Activated CD4-positive, alpha-beta T cell treated with anti-CD3 and anti-CD28 coated beads for 36 hours (primary cell): ENCODE measurements at regions of chr11 and their contacts with region 1.

Region 1: GRCh38 chr11:72430741-72431570 is 3.4 kb downstream of the CLPB start:
- DNase-seq: peak; percentile 64
- ATAC-seq: peak; percentile 42
- H3K4me3 Mint-ChIP-seq: peak overlapping the region; percentile 14
- H3K27ac Mint-ChIP-seq: peak overlapping the region; percentile 68
- H3K4me1 Mint-ChIP-seq: peaks cover 29% of the 10 kb centered on the region
- H3K27me3 Mint-ChIP-seq: no peaks in the 10 kb centered on the region

Region 2: GRCh38 chr11:71537540-71537939 is 893.4 kb before region 1 on chr11:
- CTCF ChIA-PET with region 1: no interaction called
- POLR2A ChIA-PET with region 1: no interaction called
- intact Hi-C with region 1: no loop called
- DNase-seq: no peak
- ATAC-seq: no peak
- H3K4me3 Mint-ChIP-seq: no peak overlapping the region
- H3K27ac Mint-ChIP-seq: no peak overlapping the region
- H3K4me1 Mint-ChIP-seq: peaks cover 7% of the 10 kb centered on the region
- H3K27me3 Mint-ChIP-seq: peaks cover 5% of the 10 kb centered on the region

Region 3: DNA sequence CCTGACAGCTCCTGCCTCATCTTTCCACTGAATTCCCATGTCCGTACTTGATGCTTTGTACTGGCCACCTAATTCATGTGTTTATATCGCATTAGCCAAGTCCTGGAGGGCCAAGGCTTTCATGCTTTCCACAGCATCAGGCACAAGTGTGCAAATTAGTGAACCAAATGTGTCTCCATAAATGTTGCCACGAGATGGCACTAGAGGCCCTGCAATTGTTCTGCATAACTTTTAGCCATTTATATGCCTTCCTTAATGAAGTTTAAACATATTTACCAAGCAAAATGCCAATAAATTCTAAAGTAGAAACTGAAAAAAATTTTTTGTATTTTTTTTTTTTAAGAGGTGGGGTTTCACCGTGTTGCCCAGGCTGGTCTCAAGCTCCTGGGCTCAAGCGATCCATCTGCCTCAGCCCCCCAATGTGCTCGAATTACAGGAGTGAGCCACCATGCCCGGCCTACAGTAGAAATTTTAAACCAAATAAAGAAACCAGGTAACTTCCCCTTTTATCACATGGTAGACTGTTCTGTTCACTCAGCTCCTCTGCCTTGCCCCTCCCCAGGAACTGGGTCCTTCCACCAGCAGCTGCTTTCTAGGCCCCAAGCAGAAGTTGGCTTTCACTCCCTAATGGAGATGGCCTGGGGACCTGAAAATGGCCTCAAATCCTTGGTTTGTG is 453.1 kb before region 1 on chr11:
- CTCF ChIA-PET with region 1: no interaction called
- POLR2A ChIA-PET with region 1: no interaction called
- intact Hi-C with region 1: loop called in 1 of 2 experiments (anchors 5 kb)
- DNase-seq: peak; percentile 69
- ATAC-seq: peak; percentile 63
- H3K4me3 Mint-ChIP-seq: no peak overlapping the region
- H3K27ac Mint-ChIP-seq: no peak overlapping the region
- H3K4me1 Mint-ChIP-seq: peaks cover 2% of the 10 kb centered on the region
- H3K27me3 Mint-ChIP-seq: no peaks in the 10 kb centered on the region

Region 4: GRCh38 chr11:72102946-72103753 is 327.8 kb before region 1 on chr11 and contains the start of gene LAMTOR1:
- CTCF ChIA-PET with region 1: no interaction called
- POLR2A ChIA-PET with region 1: no interaction called
- intact Hi-C with region 1: loop called in 1 of 2 experiments (anchors 1 kb)
- DNase-seq: peak; percentile 99
- ATAC-seq: peak; percentile 98
- H3K4me3 Mint-ChIP-seq: peak within 1 kb of the TSS; percentile 97
- H3K27ac Mint-ChIP-seq: peak within 1 kb of the TSS; percentile 95
- H3K4me1 Mint-ChIP-seq: peaks cover 38% of the 10 kb centered on the region
- H3K27me3 Mint-ChIP-seq: no peaks in the 10 kb centered on the region
- total RNA-seq, gene LAMTOR1: 50.7 to 52.2 TPM

Region 5: DNA sequence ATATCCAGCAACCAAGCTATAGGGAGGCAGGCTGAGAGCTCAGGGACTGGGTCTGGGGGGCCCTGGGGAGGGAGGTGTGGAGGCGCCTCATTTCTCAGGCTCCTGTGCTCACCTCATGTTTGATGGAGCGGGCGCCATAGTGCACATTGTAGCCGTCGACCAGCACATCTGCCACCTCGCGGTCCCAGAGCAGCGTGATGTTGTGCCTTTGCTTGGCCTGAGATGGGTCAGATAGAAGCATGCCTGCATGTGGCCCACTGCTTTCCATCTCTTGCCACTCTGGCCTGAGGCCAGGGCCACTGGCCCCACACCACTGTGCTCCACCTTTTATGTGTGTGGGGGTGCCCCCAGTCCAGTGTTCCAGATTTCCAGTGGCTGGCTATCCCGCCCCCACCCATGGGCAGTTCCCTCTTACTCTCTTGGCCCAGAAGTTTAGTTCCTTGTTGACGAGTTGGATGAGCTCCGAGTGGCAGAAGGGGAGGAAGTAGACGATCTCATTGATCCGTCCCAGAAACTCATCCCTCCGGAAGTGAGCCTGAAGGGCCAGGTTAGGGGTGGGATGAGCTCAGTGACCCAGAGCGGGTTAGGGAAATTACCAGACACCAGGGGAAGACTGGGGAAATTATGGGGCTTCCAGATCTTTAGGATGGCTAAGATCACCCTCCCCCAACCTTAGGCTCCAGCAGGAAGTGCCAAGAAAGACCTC is 136.9 kb before region 1 on chr11:
- CTCF ChIA-PET with region 1: interaction called, 24 read pairs
- POLR2A ChIA-PET with region 1: no interaction called
- intact Hi-C with region 1: loop called (anchors 1 kb)
- DNase-seq: no peak
- ATAC-seq: no peak
- H3K4me3 Mint-ChIP-seq: no peak overlapping the region
- H3K27ac Mint-ChIP-seq: no peak overlapping the region
- H3K4me1 Mint-ChIP-seq: no peaks in the 10 kb centered on the region
- H3K27me3 Mint-ChIP-seq: no peaks in the 10 kb centered on the region

Region 6: GRCh38 chr11:72413914-72414628 is 16.9 kb before region 1 on chr11:
- CTCF ChIA-PET with region 1: interaction called, 69 read pairs
- POLR2A ChIA-PET with region 1: interaction called, 3 read pairs
- intact Hi-C with region 1: no loop called
- DNase-seq: peak; percentile 92
- ATAC-seq: peak; percentile 85
- H3K4me3 Mint-ChIP-seq: no peak overlapping the region
- H3K27ac Mint-ChIP-seq: peak overlapping the region; percentile 57
- H3K4me1 Mint-ChIP-seq: peaks cover 29% of the 10 kb centered on the region
- H3K27me3 Mint-ChIP-seq: no peaks in the 10 kb centered on the region

Region 7: GRCh38 chr11:72635933-72636332 is 205.0 kb after region 1 on chr11:
- CTCF ChIA-PET with region 1: no interaction called
- POLR2A ChIA-PET with region 1: no interaction called
- intact Hi-C with region 1: no loop called
- DNase-seq: no peak
- ATAC-seq: no peak
- H3K4me3 Mint-ChIP-seq: no peak overlapping the region
- H3K27ac Mint-ChIP-seq: no peak overlapping the region
- H3K4me1 Mint-ChIP-seq: no peaks in the 10 kb centered on the region
- H3K27me3 Mint-ChIP-seq: peaks cover 2% of the 10 kb centered on the region

Region 8: DNA sequence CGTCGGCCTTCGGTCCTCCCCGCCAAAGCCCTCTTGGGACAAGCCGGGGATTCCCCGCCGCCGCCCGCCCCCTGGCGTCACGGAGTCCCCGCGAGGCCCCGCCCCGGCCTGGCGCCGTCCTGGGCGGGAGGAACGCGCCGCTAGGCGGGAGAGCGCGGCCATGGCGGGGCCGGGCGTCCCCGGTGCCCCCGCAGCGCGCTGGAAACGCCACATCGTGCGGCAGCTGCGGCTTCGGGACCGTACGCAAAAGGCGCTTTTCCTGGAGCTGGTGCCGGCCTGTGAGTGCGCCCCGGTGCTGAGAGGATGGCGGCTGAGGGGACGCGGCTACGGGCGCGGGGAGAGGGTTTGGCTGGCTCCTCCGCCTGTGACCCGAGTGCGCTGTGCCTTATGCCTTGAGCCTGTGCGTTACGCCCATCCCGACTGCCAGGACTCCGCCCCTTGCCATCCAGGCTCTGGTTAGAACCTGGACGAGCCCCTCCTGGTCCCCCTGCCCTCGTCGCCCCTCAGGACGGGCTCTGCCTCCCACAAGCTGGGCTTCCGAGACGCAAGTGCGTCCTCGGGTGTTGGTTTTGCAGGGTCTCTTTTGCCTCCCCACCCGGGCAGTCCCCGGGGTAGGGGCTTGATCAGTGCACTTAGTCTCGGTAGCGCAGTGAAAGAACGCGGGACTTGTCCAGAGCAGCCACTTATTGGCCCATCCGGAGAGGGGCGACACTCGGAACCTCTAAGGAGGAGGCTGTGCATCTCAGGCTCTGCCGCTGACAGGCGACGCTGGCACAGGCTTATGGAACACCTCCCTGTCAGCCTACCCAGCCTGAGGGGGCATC is 383.5 kb after region 1 on chr11 and contains the start of gene ATG16L2:
- CTCF ChIA-PET with region 1: no interaction called
- POLR2A ChIA-PET with region 1: no interaction called
- intact Hi-C with region 1: loop called in 1 of 2 experiments (anchors 1 kb)
- DNase-seq: peak; percentile 94
- ATAC-seq: peak; percentile 65
- H3K4me3 Mint-ChIP-seq: peak within 1 kb of the TSS; percentile 91
- H3K27ac Mint-ChIP-seq: peak within 1 kb of the TSS; percentile 98
- H3K4me1 Mint-ChIP-seq: peaks cover 30% of the 10 kb centered on the region
- H3K27me3 Mint-ChIP-seq: no peaks in the 10 kb centered on the region
- total RNA-seq, gene ATG16L2: 55.3 to 59.4 TPM

Region 9: GRCh38 chr11:73227588-73228211 is 796.7 kb after region 1 on chr11:
- CTCF ChIA-PET with region 1: no interaction called
- POLR2A ChIA-PET with region 1: no interaction called
- intact Hi-C with region 1: no loop called
- DNase-seq: no peak
- ATAC-seq: no peak
- H3K4me3 Mint-ChIP-seq: no peak overlapping the region
- H3K27ac Mint-ChIP-seq: no peak overlapping the region
- H3K4me1 Mint-ChIP-seq: no peaks in the 10 kb centered on the region
- H3K27me3 Mint-ChIP-seq: no peaks in the 10 kb centered on the region